Activated CD8-positive, alpha-beta T cell treated with anti-CD3 and anti-CD28 coated beads, Interleukin-2, amount 10 ng/mL, durations not matched to agents 7 days and 5 days (primary cell): ENCODE measurements at regions of chr4 and their contacts with region 1.

Region 1: DNA sequence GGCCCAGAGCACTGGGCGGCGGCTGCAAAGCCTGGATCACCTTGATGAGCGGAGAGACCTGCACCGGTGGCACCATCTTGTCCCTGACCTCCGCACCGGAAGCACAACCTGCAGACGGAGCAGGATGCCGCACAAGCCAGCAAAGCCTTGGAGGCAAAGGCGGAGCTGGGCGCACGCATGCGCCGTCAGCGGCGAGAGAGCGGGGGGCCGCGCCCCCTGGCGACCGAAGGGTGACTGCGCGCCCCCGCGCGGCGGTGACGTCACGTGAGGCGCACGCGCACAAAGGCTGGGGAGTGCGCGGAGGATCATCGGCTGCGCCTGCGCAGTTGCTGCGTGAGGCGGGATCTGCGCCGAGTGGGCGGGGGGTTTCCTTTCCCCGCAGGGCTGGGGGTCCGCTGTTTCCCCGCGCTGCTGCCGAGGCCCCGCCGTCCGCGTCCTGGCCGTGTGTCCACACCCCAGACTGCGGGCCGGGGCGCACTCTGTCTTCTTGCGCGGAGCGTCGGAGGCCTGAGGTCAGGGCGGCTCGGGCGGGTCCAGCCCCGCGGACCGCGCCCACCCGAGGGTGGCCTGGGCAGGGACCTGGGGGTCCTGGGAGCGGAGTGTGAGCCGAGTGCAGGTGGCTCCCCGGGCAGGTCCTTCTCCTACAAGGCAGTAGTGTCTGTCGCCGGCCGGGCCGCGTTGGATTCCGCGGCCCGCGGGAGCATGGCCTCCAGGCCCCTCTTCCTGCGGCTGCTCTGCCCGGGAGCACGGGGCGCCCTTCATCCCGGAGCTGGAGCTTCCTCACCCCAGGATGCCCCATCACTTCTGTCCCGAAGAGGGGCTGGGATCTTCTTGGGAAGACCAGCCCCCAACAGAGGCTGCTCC is at the starts of genes ATP5ME and MYL5:
- DNase-seq: peak; percentile 98
- ATAC-seq: peak; percentile 96
- H3K4me3 Mint-ChIP-seq: peak within 1 kb of the TSS; percentile 86
- H3K27ac Mint-ChIP-seq: peak within 1 kb of the TSS; percentile 90
- H3K4me1 Mint-ChIP-seq: peaks cover 18% of the 10 kb centered on the region
- H3K27me3 Mint-ChIP-seq: no peaks in the 10 kb centered on the region
- total RNA-seq, gene ATP5ME: 243 to 267 TPM
- total RNA-seq, gene MYL5: 11.6 to 19.3 TPM

Region 2: GRCh38 chr4:271492-272103 is 402.8 kb before region 1 on chr4:
- CTCF ChIA-PET with region 1: no interaction called
- POLR2A ChIA-PET with region 1: no interaction called
- DNase-seq: no peak
- ATAC-seq: no peak
- H3K4me3 Mint-ChIP-seq: no peak overlapping the region
- H3K27ac Mint-ChIP-seq: no peak overlapping the region
- H3K4me1 Mint-ChIP-seq: no peaks in the 10 kb centered on the region
- H3K27me3 Mint-ChIP-seq: no peaks in the 10 kb centered on the region

Region 3: GRCh38 chr4:602559-602942 is 71.9 kb before region 1 on chr4:
- CTCF ChIA-PET with region 1: interaction called, 11 read pairs
- POLR2A ChIA-PET with region 1: interaction called, 7 read pairs
- DNase-seq: peak; percentile 74
- ATAC-seq: peak; percentile 87
- H3K4me3 Mint-ChIP-seq: no peak overlapping the region
- H3K27ac Mint-ChIP-seq: no peak overlapping the region
- H3K4me1 Mint-ChIP-seq: peaks cover 8% of the 10 kb centered on the region
- H3K27me3 Mint-ChIP-seq: peaks cover 15% of the 10 kb centered on the region

Region 4: DNA sequence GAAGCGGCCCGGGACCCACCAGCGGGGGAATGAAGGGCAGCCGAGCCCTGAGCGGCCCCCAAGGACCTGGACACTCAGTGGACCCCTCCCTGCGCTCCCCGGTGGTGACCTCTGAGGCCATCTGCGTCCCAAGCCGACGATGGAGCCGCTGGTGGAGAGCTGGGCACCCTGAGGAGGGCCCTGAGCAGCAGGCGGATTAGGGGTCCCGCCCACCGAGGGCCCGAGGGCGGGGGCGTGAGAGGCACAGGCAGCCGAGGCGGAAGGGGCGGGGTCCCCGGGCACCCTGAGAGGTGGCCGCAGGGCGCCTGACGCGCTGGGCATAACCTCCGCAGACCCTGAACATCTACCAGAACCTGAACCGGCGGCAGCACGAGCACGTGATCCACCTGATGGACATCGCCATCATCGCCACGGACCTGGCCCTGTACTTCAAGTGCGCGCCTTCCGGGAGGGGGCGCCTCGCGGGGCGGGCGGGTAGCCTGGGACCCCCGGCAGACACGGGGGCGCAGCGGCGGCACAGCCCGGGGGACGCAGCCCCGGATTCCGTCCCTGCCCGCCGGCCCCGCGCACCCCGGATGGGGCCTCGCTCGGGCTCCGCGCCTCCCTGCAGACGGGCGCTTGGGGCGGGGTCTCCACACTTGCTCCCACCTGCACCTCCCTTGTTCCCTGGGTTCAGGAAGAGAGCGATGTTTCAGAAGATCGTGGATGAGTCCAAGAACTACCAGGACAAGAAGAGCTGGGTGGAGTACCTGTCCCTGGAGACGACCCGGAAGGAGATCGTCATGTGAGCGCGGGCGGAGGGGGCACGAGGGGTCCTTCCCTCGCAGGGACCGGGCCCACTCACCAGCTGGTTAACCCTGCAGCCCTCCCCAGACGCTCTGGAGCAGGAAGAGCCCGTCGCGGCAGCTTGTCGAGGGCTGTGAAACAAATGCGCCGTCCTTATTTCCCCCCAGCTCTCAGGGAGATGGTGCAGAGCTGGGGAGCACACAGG is 10.7 kb before region 1 on chr4:
- CTCF ChIA-PET with region 1: interaction called, 6 read pairs
- POLR2A ChIA-PET with region 1: interaction called, 17 read pairs
- DNase-seq: peak; percentile 85
- ATAC-seq: peak; percentile 80
- H3K4me3 Mint-ChIP-seq: peak overlapping the region; percentile 81
- H3K27ac Mint-ChIP-seq: peak overlapping the region; percentile 89
- H3K4me1 Mint-ChIP-seq: peaks cover 22% of the 10 kb centered on the region
- H3K27me3 Mint-ChIP-seq: no peaks in the 10 kb centered on the region